ENCODE measurements at regions of chr6 and their contacts with region 1.

Region 1: GRCh38 chr6:153167061-153167891 is 36.2 kb upstream of the RGS17 start:
- DNase-seq: peak in 1 of 2 experiments; percentile 61
- H3K4me3 ChIP-seq: no peak overlapping the region
- H3K27ac ChIP-seq: peak overlapping the region; percentile 67
- H3K4me1 ChIP-seq: peaks cover 36% of the 10 kb centered on the region
- H3K27me3 ChIP-seq: no peaks in the 10 kb centered on the region
- CTCF ChIP-seq: no peak

Region 2: GRCh38 chr6:152765331-152765730 is 401.9 kb before region 1 on chr6:
- CTCF ChIA-PET with region 1: no interaction called
- POLR2A ChIA-PET with region 1: no interaction called
- intact Hi-C with region 1: no loop called
- DNase-seq: no peak
- H3K4me3 ChIP-seq: no peak overlapping the region
- H3K27ac ChIP-seq: no peak overlapping the region
- H3K4me1 ChIP-seq: no peaks in the 10 kb centered on the region
- H3K27me3 ChIP-seq: no peaks in the 10 kb centered on the region
- CTCF ChIP-seq: no peak

Region 3: GRCh38 chr6:153129873-153130514 is 37.3 kb before region 1 on chr6:
- CTCF ChIA-PET with region 1: no interaction called
- POLR2A ChIA-PET with region 1: no interaction called
- intact Hi-C with region 1: loop called (anchors 5 kb)
- DNase-seq: peak in 1 of 2 experiments; percentile 3
- H3K4me3 ChIP-seq: peak overlapping the region; percentile 78
- H3K27ac ChIP-seq: no peak overlapping the region
- H3K4me1 ChIP-seq: peaks cover 30% of the 10 kb centered on the region
- H3K27me3 ChIP-seq: no peaks in the 10 kb centered on the region
- CTCF ChIP-seq: no peak

Region 4: DNA sequence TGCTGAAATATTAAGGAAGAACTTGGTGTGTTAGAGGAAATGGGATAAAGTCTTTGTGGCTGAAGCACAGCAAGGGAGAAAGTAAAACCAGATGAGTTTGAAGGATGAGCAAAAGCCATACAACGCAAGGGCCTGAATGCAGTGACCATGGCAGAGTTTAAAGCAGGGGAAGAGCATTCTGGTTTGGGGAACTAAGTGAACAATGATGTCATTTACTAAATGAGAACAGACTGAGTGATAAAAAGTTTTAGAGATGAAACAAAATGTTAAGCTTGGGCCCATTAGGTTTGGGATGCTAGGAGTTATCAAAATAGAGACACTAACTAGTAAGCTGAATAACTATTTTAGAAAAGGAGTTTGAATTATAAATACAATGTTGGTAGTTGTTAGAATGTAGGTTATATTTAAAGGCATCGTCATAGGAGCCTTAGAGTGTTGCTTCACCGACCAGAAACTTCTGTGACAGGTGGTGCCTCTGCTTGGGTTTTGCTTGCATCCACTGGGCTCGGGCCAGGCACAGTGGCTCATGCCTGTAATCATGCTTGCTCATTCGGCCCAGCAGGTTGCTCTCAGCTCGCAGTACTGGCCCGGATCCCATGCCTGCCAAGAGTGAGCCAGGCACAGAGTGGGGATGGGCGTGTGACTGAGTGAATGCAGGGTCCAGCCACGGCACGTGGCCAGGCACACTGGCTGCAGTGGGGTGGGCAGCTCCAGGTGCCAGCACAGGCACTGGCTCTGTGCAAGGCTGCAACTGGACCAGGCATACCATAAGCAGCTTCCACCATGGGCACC is 834.4 kb after region 1 on chr6:
- CTCF ChIA-PET with region 1: no interaction called
- POLR2A ChIA-PET with region 1: no interaction called
- intact Hi-C with region 1: no loop called
- DNase-seq: no peak
- H3K4me3 ChIP-seq: no peak overlapping the region
- H3K27ac ChIP-seq: no peak overlapping the region
- H3K4me1 ChIP-seq: no peaks in the 10 kb centered on the region
- H3K27me3 ChIP-seq: no peaks in the 10 kb centered on the region
- CTCF ChIP-seq: no peak